OCI-LY7 (cell line): ENCODE measurements at regions of chr1 and their contacts with region 1.

Region 1: GRCh38 chr1:160031365-160032164 is at the start of gene PIGM:
- DNase-seq: peak; percentile 97
- H3K4me3 ChIP-seq: peak within 1 kb of the TSS; percentile 74
- H3K27ac ChIP-seq: peak within 1 kb of the TSS; percentile 46
- H3K4me1 ChIP-seq: peaks cover 24% of the 10 kb centered on the region
- CTCF ChIP-seq: no peak
- total RNA-seq, gene PIGM: 4.1 and 4.2 TPM in 2 replicates

Region 2: GRCh38 chr1:160018900-160019299 is 12.7 kb before region 1 on chr1:
- CTCF ChIA-PET with region 1: no interaction called
- POLR2A ChIA-PET with region 1: interaction called, 12 read pairs
- intact Hi-C with region 1: no loop called
- DNase-seq: no peak
- H3K4me3 ChIP-seq: no peak overlapping the region
- H3K27ac ChIP-seq: no peak overlapping the region
- H3K4me1 ChIP-seq: no peaks in the 10 kb centered on the region
- CTCF ChIP-seq: no peak

Region 3: DNA sequence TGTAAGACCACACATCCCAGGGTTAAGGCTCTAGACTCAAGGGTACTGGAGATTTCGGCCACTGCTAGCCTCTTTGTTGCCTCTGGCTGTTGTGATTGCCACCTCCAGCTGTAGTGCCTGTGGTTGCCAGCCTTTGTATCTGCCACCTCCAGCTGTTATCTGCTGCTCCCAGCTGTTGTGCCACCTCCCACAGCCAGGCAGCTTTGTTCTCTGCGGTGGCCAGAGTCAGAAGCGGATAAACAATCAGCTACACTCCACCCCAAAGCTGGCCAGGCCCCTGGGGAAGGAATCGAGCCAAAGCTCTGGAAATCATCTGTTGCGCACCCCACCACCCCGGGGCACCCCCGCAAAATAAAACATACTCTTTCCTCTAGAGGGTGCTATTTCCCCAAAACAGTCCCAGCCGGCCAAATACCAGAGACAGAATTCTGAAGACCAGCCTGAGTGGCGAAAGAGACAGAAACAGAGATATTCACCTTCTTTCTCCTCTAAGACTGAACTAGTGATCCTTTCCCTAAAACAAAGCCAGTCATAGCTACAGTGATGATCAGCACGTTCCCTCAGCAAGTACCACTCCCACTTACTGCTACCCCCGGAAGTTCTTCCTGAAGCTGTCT is 15.0 kb after region 1 on chr1:
- CTCF ChIA-PET with region 1: interaction called, 4 read pairs
- POLR2A ChIA-PET with region 1: interaction called, 15 read pairs
- intact Hi-C with region 1: no loop called
- DNase-seq: peak; percentile 62
- H3K4me3 ChIP-seq: peak overlapping the region; percentile 50
- H3K27ac ChIP-seq: no peak overlapping the region
- H3K4me1 ChIP-seq: peaks cover 18% of the 10 kb centered on the region
- CTCF ChIP-seq: peak; percentile 93

Region 4: GRCh38 chr1:160078512-160079195 is 47.1 kb after region 1 on chr1:
- CTCF ChIA-PET with region 1: no interaction called
- POLR2A ChIA-PET with region 1: no interaction called
- intact Hi-C with region 1: loop called (anchors 5 kb)
- DNase-seq: peak; percentile 56
- H3K4me3 ChIP-seq: no peak overlapping the region
- H3K27ac ChIP-seq: no peak overlapping the region
- H3K4me1 ChIP-seq: no peaks in the 10 kb centered on the region
- CTCF ChIP-seq: peak; percentile 97